MCF 10A (cell line): ENCODE measurements at regions of chr18 and their contacts with region 1.

Region 1: DNA sequence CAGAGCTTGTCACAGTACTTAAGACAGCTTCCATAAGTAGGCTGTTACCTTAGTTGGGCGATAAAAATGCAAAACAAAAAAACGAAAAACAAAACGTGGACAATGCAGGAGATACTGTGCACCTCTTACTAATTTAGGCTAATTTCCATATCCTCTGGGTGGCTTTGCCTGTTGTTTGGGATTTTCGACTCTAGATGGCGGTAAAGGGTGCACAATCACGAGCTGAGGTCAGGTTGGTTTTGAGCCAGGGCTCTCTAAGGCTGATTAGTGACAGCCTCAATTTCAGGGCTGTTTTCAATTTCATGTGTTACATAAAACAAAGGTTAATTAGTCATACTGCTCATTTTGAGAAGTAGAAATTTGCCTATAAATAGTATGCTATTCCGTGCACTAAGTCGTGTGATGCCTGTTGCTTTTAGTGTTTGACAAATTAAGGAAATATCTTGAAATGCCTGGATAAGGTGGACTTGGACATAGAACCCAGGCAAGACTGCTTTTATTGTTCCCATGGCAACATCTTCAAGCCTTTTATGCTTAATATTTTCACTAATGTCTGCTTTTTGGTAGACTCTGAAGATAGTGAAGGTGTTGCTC is 493.1 kb downstream of the SOCS6 start:
- DNase-seq: peak; percentile 76
- H3K4me3 Mint-ChIP-seq: no peak overlapping the region
- H3K27ac Mint-ChIP-seq: no peak overlapping the region
- H3K4me1 Mint-ChIP-seq: no peaks in the 10 kb centered on the region
- H3K27me3 Mint-ChIP-seq: peaks cover 66% of the 10 kb centered on the region
- CTCF ChIP-seq: peak; percentile 68

Region 2: DNA sequence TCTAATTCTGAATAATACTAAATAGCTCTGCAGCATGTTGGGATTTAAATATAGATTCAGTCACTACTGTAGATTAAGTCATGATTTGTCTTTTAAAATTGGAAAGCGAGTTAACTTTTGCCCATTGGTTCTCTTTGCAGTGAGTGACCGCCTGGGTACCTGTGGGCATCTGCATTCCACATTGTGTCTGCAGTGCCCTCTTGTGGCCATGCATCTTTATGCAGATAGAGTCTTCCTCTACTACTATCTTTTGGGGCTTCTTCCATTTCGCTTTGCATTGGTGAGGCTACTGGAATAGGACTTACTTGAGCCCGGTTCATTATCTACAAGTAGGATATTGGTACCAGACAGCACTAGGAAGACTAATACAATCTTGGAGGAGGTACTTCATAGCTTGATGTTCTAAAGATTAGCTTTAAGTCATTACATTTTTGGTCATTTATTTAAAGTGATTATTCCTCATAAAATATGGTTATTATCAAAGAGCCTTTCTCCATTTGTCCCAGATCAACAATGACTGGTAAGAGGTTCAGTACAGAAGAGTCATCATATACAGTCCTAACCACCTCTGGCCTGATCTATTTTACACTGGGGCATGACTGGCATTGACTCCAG is 290.1 kb before region 1 on chr18:
- CTCF ChIA-PET with region 1: interaction called, 10 read pairs
- POLR2A ChIA-PET with region 1: no interaction called
- intact Hi-C with region 1: loop called (anchors 2 kb)
- DNase-seq: peak; percentile 79
- H3K4me3 Mint-ChIP-seq: no peak overlapping the region
- H3K27ac Mint-ChIP-seq: no peak overlapping the region
- H3K4me1 Mint-ChIP-seq: peaks cover 8% of the 10 kb centered on the region
- H3K27me3 Mint-ChIP-seq: no peaks in the 10 kb centered on the region
- CTCF ChIP-seq: peak; percentile 81

Region 3: GRCh38 chr18:70645971-70646370 is 136.0 kb before region 1 on chr18:
- CTCF ChIA-PET with region 1: no interaction called
- POLR2A ChIA-PET with region 1: no interaction called
- intact Hi-C with region 1: no loop called
- DNase-seq: peak; percentile 34
- H3K4me3 Mint-ChIP-seq: no peak overlapping the region
- H3K27ac Mint-ChIP-seq: no peak overlapping the region
- H3K4me1 Mint-ChIP-seq: peaks cover 5% of the 10 kb centered on the region
- H3K27me3 Mint-ChIP-seq: no peaks in the 10 kb centered on the region
- CTCF ChIP-seq: no peak

Region 4: DNA sequence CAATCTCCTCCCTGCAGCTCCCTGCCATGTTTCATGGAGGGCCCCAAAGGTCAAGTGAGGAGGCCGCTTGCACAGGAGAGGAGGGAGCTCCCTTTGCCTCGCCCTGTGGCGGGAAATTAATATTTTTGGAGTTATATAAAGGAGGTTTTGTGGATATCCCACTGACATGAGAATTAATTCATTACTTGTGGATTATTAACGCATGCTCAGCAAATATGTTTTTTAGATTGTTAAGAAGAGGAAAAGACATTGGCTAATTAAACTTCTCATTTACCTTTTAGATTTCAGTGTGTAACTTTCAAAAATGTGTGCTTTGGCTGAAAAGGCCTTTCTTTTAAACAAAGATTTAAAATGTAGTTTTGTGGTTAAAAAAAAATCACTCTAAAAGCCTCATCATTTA is 19.1 kb before region 1 on chr18:
- CTCF ChIA-PET with region 1: interaction called, 14 read pairs
- POLR2A ChIA-PET with region 1: no interaction called
- intact Hi-C with region 1: no loop called
- DNase-seq: no peak
- H3K4me3 Mint-ChIP-seq: no peak overlapping the region
- H3K27ac Mint-ChIP-seq: no peak overlapping the region
- H3K4me1 Mint-ChIP-seq: no peaks in the 10 kb centered on the region
- H3K27me3 Mint-ChIP-seq: peaks cover 47% of the 10 kb centered on the region
- CTCF ChIP-seq: no peak

Region 5: GRCh38 chr18:71047882-71048281 is 265.9 kb after region 1 on chr18:
- CTCF ChIA-PET with region 1: no interaction called
- POLR2A ChIA-PET with region 1: no interaction called
- intact Hi-C with region 1: no loop called
- DNase-seq: no peak
- H3K4me3 Mint-ChIP-seq: no peak overlapping the region
- H3K27ac Mint-ChIP-seq: no peak overlapping the region
- H3K4me1 Mint-ChIP-seq: no peaks in the 10 kb centered on the region
- H3K27me3 Mint-ChIP-seq: peaks cover 12% of the 10 kb centered on the region
- CTCF ChIP-seq: no peak

Region 6: DNA sequence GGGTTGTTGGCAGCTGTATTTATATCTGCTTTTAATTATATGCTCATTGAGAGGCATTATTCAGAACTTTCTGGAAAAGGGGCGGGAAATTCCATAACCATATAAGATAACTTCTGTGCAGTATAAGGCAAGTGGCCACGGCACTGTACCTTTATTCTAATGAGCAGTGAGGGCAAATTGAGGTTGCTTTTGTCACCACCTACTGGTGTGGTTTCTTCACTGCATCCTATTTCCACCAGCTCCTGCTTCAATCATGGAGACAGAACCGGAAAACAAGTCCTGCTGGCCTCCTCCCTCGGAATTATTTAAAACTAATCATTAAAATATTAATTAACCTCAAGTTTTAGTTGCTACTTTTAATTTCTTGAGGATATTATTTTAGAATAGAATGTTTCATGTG is 1002.8 kb after region 1 on chr18:
- CTCF ChIA-PET with region 1: no interaction called
- POLR2A ChIA-PET with region 1: no interaction called
- intact Hi-C with region 1: loop called (anchors 10 kb)
- DNase-seq: peak; percentile 34
- H3K4me3 Mint-ChIP-seq: no peak overlapping the region
- H3K27ac Mint-ChIP-seq: no peak overlapping the region
- H3K4me1 Mint-ChIP-seq: no peaks in the 10 kb centered on the region
- H3K27me3 Mint-ChIP-seq: no peaks in the 10 kb centered on the region
- CTCF ChIP-seq: peak; percentile 49

Region 7: DNA sequence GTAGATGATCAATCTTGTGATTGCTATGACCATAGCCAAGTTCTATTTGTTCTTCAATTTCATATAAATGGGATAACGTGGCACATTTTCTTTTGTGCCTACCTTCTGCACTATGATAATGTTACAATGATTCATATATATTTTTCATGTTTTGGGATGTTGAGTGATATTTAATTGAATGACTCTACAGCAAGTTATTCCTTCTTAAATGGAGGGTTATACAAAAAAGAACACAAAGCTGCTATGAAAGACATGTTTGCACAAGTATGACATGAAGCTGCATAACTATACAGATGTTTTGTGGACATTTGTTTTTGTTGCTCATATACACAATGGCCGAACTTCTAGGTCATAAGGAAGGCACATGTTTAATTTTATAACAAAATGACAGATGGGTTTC is 1406.0 kb after region 1 on chr18:
- CTCF ChIA-PET with region 1: no interaction called
- POLR2A ChIA-PET with region 1: no interaction called
- intact Hi-C with region 1: no loop called
- DNase-seq: no peak
- H3K4me3 Mint-ChIP-seq: no peak overlapping the region
- H3K27ac Mint-ChIP-seq: no peak overlapping the region
- H3K4me1 Mint-ChIP-seq: no peaks in the 10 kb centered on the region
- H3K27me3 Mint-ChIP-seq: no peaks in the 10 kb centered on the region
- CTCF ChIP-seq: no peak

Region 8: DNA sequence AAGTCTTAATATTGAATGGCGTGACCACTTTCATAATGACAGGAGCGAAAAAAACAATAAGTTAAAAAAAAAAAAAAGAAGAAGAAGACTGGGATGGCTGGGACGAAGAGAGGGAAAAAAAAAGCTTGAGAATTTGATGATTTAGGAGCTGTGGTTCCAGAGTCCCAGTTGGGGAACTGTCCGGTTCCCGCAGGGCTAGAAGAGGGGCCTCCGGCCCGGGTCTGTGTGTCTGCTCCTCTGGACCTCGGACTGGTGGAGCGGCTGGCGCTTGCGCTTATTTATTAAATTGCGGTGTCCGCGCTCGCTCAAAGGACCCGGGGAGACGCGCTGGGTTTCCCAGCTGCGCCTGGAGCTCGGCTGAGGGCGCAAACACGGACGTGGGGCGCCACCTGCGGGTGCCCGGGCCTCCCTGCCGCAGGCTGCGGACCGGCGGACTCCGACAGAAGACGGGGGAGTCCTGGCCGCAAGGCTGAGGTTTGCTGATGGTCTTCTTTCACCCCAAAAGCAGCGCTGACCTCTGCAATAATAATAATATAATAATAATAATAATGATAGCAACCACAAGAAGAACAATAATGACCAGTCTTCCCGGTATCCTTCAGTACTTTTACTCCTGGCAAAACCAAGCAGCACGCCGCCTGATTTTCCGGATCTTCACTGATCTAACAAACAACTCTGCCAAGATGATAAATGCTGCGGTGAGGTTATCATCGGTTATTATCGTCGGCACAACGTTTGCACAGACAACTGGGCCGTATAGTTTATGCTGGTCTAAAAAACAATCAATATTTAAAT is 1762.3 kb after region 1 on chr18 and contains the start of gene CBLN2:
- CTCF ChIA-PET with region 1: interaction called, 10 read pairs
- POLR2A ChIA-PET with region 1: no interaction called
- intact Hi-C with region 1: loop called (anchors 1 kb)
- DNase-seq: peak; percentile 66
- H3K4me3 Mint-ChIP-seq: peak within 1 kb of the TSS; percentile 71
- H3K27ac Mint-ChIP-seq: no peak within 1 kb of the TSS
- H3K4me1 Mint-ChIP-seq: no peaks in the 10 kb centered on the region
- H3K27me3 Mint-ChIP-seq: peaks cover 71% of the 10 kb centered on the region
- CTCF ChIP-seq: peak; percentile 90
- total RNA-seq, gene CBLN2: not detected in 2 replicates

Region 9: DNA sequence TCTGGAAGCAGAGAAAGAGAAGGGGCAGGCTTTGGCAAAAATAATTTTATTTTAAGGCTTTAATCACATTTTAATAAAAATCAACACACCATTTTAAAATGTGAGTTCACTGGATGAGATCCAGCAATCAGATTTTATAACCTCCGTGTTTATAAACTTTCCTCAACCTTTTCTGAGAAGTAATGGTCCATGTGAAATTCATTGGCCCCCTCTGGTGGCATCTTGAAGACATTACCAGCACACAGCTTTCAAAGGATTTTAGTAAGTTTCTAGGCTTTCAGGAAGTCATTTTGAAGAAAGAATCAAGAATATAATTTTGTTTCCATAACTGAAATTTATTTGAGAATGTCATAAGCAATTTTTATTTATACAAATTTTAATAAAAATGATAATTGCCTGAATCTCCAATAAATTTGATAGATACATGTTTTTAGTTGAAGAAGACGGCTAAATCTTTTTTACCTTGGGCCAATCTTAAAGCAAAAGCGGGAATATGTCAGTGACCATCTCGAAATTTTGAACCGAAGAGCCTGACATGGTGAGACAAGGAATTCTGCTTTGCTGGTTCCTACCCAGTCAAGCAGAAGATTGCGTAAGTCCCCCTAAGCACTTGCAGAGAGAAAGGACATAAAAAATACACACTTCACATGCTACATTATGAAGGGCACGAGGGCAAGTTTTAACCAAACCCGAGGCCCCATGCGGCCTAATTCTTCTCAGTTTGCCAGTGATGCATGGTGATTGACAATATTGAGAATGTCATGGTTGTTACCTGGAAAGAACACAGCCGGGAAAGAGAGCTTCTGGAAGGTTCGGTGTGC is 1890.6 kb after region 1 on chr18:
- CTCF ChIA-PET with region 1: interaction called, 6 read pairs
- POLR2A ChIA-PET with region 1: no interaction called
- intact Hi-C with region 1: loop called (anchors 2 kb)
- DNase-seq: peak; percentile 56
- H3K4me3 Mint-ChIP-seq: no peak overlapping the region
- H3K27ac Mint-ChIP-seq: no peak overlapping the region
- H3K4me1 Mint-ChIP-seq: no peaks in the 10 kb centered on the region
- H3K27me3 Mint-ChIP-seq: no peaks in the 10 kb centered on the region
- CTCF ChIP-seq: peak; percentile 65